HCT116 (cell line): ENCODE measurements at regions of chr9 and their contacts with region 1.

Region 1: DNA sequence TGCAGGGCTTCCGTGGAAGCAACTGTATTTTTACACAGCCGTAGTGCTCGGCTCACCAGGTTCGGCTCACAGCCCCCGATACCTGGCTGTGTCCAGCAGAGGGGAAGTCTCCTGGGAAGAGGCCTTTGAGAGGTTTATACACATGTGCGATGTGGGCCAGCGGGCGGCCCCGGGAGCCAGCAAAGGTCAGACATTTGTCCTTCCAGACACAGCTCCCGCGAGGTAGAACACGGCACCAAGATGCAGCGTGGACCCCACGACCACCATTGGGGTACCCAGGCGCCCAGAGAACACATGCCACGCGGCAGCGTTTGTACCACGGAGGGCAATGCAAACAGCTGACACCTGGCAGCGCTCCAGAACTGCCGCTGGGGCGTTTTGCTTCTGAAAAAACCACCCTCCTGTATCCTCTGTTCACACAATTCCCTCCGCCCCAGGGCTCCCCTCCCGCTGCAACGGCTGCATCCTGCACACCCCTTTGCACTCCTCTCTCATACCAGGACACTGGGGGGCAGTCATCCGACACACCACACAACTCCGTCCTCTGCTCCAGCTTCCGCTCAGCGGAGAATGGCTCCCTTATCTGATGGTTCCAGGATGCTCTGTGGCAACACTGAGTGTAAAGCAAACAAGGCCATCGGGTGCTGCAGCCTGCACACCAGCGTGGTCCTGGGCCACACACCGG is 235.3 kb downstream of the SYK start:
- DNase-seq: peak; percentile 47
- ATAC-seq: peak; percentile 90
- H3K4me3 ChIP-seq: no peak overlapping the region
- H3K27ac ChIP-seq: peak overlapping the region; percentile 73
- H3K4me1 ChIP-seq: peaks cover 21 to 29% of the 10 kb centered on the region in 2 experiments
- H3K27me3 ChIP-seq: no peaks in the 10 kb centered on the region
- CTCF ChIP-seq: peak; percentile 56 to 61 (median 60); a peak in 5 of 6 replicates
- POLR2A ChIP-seq: no peak
- RAD21 ChIP-seq: peak; percentile 94

Region 2: DNA sequence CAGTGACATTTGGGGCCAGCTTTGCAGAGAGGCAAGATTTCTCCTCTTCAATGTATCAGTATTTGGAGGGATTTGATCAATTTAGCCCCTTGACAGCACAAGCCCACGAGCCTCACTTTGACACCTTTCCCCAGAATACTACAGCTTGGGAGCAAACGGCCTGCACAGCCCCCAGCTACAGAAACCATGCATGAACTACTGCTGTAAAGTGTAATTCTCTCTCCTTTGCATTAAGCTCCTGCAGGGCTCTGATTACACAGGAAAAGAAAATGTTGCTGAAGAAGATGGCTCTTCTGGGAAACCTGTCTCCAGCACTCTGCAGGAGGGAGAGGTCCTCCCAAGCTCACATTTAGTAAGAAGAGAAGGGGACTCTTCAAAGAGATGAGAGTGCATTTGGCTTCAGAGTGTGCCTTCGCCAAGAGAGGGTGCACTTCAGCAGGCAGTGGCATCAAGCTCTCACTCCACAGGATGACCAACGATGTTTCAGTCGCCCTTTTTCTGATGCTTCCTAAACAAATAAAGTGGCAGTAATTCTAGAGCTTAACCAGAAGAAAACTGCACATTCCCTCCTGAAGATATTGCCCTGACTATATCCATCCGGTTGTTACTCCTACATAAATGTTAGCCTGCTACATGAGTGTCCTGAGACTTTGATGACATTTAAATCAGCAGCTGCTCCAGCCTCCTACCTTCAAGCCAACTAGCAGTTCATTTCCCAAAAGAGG is 52.6 kb after region 1 on chr9:
- CTCF ChIA-PET with region 1: no interaction called
- POLR2A ChIA-PET with region 1: no interaction called
- RAD21 ChIA-PET with region 1: no interaction called
- intact Hi-C with region 1: no loop called
- DNase-seq: no peak
- ATAC-seq: peak; percentile 80
- H3K4me3 ChIP-seq: no peak overlapping the region
- H3K27ac ChIP-seq: no peak overlapping the region
- H3K4me1 ChIP-seq: no peaks in the 10 kb centered on the region
- H3K27me3 ChIP-seq: no peaks in the 10 kb centered on the region
- CTCF ChIP-seq: peak; percentile 39 to 55 (median 39); a peak in 5 of 6 replicates
- POLR2A ChIP-seq: no peak
- RAD21 ChIP-seq: peak; percentile 92

Region 3: DNA sequence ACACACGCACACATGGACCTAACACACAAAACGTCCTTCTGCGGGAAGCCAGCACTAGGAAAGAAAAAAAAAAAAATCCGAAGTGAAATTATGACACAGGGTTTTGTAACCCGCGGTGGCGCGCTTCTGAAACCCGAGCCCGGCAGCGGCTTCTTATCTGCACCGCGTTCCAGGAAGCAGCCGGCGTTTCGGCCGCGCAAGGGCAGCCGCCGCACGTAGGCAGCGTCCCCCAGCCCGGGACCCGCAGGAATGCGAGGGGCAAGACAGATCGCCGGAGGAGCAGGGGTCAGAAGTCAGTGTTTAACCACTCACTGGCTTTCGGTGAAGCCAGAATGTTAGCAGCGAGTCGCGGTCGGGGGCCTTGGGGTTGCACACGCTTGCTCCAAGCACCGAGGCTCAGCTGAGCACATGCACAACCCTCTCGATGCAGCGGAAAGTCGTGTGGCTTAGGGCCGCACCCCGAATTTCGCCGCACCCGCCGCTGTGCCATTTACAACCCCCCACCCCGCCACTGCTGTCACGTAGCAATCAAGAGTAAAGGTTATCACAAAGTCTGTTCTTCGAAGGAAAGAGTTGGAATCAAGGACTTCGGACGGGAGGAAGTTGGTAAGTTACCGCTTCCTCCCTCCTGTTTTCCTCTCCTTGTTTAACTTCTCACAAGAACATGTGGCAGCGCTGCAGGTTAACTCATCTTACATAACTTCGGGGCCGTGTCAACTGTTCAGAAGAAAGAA is 156.9 kb after region 1 on chr9:
- CTCF ChIA-PET with region 1: no interaction called
- POLR2A ChIA-PET with region 1: no interaction called
- RAD21 ChIA-PET with region 1: no interaction called
- intact Hi-C with region 1: loop called (anchors 5 kb)
- DNase-seq: peak; percentile 64
- ATAC-seq: peak; percentile 56
- H3K4me3 ChIP-seq: peak overlapping the region; percentile 42 to 58
- H3K27ac ChIP-seq: peak overlapping the region; percentile 100
- H3K4me1 ChIP-seq: peaks cover 62 to 83% of the 10 kb centered on the region in 2 experiments
- H3K27me3 ChIP-seq: no peaks in the 10 kb centered on the region
- CTCF ChIP-seq: no peak
- POLR2A ChIP-seq: no peak
- RAD21 ChIP-seq: no peak

Region 4: DNA sequence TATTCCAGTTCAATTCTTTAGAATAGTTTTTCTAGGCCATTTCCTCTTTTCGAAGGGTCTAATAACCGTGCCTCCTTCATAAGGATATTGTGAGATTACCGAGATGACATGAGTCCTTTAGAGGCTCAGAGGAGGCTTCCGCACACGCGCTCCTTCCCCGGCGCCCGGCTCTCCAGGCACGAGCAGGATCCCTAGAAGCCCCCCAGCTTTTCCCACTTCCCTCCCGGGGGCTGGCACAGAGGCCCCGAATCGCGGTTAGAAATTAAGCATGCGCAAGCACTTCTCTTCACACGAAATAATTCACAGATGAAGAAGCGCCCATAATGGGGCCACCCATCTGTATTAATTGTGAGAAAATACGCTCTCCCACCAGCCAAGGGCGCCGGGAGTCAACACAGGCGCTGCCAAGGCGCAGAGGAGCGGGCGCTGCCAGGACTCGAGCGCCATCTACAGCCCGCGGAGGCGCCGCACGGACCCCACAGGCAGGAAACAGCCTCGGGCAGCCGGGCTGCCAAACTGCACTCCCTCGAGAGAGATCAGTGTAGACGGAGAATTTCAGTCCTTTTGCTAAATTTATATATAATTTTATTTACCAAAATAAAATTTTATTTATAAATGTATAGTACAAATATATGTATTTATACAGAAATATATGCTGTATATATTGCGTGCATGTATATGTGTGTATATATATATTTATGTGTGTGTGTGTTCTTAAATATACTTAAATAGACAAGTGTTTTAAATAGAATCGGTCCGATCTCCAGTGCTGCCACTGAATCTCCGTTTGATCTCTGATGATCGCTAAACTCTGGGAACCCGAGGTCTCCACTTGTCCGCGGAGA is 644.7 kb after region 1 on chr9:
- CTCF ChIA-PET with region 1: no interaction called
- POLR2A ChIA-PET with region 1: no interaction called
- RAD21 ChIA-PET with region 1: no interaction called
- intact Hi-C with region 1: loop called (anchors 1 kb)
- DNase-seq: peak; percentile 45
- ATAC-seq: peak; percentile 100
- H3K4me3 ChIP-seq: no peak overlapping the region
- H3K27ac ChIP-seq: no peak overlapping the region
- H3K4me1 ChIP-seq: no peaks in the 10 kb centered on the region; a peak in 1 of 4 replicates
- H3K27me3 ChIP-seq: no peaks in the 10 kb centered on the region
- CTCF ChIP-seq: peak; percentile 87 to 98 (median 94)
- POLR2A ChIP-seq: no peak
- RAD21 ChIP-seq: peak; percentile 94